Lower leg skin (tissue), 4 donors: ENCODE measurements at regions of chr1 and their contacts with region 1.

Region 1: DNA sequence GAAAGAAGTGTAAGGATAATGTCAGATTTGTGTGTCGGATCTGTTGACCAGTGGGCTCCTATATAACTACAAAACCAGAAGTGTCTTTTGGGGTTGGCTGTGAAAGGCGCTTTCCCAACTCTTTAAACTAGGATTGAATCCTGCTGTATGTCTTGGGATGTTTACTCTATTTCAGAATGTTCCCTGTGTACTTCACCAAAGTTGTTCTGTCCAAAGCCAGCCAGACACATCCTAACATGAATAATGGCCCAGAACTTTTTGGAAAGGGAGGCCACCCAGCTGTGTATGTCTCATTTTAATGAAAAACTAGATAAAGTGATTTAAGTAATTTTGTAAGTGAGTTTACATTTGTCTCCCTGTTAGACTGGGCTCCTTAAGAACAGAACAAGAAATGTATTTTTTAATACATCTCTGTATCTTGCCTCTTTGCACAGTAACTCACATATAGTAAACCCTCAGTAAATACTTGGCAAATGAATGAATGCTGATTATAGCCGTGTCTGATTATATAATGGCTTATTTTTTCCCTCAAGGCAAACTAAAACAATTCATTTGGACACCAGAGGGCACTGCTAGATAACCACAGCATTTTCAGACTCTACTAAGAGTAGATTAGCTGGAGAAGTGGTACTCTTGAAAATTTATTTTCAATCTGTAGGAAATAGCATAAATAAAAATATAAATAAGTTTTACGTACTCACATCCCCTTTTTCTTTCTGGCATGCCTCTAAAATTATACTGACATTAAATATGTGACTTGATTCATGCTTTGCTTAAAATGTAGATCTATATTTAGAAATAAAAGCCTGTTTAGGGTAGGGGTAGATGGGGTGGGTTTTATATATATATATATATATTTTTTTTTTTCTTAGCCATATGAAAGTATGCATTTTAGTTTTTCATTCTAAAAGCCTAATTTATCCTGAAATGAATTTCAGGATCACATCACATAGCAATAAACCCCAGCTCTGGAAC is 23.8 kb downstream of the TSEN15 start:
- DNase-seq: peak in 1 of 2 donors; percentile 37
- H3K4me3 ChIP-seq: no peak overlapping the region
- CTCF ChIP-seq: no peak
- POLR2A ChIP-seq: no peak

Region 2: DNA sequence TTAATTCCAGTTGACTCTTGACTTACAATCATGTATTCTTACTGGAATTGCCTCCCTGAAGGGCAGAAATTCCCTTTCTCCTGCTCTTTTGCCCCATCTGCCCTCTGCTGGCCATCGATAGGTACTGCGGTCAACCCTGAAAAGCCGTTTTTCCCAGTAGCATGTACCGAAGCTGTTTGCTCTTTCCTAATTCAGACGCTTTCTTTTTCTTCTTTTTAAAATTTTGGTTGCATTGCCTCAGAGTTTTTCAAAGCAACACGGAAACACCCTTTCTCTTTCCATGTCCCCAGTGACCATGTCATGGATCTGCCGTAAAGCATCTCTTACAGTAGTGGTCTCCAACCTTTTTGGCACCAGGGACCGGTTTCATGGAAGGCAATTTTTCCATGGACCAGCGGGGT is 147.3 kb after region 1 on chr1:
- intact Hi-C with region 1: loop called (anchors 5 kb)
- DNase-seq: peak; percentile 23 to 88
- H3K4me3 ChIP-seq: no peak overlapping the region
- CTCF ChIP-seq: peak in 2 of 3 donors; percentile 25 to 86
- POLR2A ChIP-seq: no peak

Region 3: DNA sequence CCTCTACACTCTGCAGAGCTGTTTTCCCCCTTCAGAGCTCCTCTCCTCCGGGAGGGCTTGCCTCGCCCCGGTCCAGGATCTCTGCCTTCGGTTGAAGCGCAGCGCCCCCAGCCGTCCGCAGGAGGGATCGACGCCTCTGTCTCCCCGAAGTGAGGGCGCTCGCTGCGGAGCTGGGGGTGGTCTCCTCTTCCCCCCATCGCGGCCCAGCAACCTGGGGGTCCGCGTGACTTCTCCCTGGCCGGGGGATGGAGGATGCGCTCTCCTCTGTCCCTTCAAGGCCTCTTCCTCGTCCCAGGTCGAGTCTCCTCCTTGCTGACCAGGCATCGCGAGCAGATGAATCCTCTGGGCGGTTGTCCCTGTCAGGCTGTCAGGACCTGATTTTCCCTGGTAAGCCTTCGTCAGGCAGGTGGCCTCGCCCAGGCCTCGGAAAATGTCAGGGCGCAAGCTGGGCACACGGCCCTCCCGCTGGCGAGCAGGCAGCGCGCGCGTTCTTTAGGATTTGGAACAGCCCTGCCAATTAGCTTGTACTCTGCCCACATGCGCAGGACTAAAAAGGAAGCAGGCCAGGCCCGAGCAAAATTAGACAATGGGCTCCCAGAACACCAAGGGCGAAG is 588.8 kb after region 1 on chr1:
- intact Hi-C with region 1: loop called (anchors 10 kb)
- DNase-seq: peak; percentile 52 to 95
- H3K4me3 ChIP-seq: no peak overlapping the region
- CTCF ChIP-seq: peak in 1 of 3 donors; percentile 83
- POLR2A ChIP-seq: no peak

Region 4: DNA sequence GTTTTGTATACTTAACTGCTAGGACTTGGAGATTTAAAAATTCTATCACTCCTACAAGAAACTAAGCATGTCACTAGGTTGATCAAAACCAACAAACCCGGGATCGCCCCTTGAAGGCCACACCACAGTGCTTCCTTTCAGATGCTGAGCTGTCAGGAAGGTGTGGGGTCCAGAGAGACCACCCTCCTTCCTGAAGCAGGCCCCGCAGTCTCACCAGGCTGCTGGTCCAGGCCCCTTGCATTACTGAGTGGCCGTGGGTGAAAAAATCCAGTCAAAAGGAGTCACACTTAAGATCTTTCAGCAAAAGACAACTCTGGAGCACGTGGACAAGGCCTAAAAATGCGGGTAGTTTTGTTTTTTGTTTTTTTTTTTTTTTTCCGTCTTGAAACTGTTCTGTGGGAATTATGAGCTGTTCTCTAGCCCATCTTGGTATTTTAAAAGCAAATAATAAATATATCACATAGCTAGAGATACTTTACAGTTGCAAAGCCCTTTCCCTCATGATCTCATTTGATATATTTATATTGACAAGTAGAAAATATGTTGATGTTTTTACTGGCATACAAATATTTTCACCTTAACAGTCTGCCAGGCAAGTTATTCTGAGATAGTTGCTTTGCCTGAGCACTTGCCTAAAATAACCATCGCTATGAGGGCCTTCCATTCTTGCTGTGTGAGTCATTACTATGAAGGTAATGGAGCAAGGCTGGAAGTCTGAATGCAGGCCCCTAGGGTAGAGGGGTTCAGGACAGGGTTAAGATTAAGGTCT is 752.4 kb after region 1 on chr1:
- intact Hi-C with region 1: no loop called
- DNase-seq: no peak
- H3K4me3 ChIP-seq: no peak overlapping the region
- CTCF ChIP-seq: no peak
- POLR2A ChIP-seq: no peak